Activated B cell treated with CpG ODN at 0.5 μM for 24 hours (primary cell): ENCODE measurements at regions of chr21 and their contacts with region 1.

Region 1: DNA sequence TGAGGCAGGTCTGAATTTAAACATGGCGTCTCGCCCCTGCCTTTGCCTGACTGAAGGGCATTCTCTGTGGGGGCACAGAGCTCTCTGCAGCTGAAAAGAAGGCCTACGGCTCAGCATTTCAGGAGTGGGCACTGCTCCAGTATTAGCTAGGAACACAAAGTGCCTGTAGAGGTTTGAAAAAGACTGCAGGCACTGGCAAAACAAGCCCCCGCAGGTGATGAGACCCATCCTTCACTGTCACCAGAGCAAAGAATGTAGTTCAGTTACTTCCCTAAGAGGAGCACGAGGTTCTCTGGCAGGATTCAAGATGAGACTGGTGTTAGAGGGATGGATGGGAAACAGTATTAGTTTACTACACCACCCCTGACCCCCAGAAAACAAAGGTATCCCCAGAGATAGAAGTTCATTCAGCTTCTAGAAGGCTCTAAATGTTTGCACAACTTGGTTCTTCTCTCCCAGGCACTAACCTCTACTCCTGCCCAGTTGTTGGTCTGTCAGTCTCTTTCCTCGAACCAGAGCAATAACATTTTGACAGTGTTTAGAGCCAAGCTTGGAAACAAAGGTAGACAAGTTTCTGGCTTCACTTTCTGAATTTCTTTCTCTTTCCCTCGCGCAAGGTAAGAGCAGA is 101.9 kb upstream of the KCNE2 start:
- DNase-seq: no peak
- ATAC-seq: no peak
- H3K4me3 Mint-ChIP-seq: no peak overlapping the region
- H3K27ac Mint-ChIP-seq: no peak overlapping the region
- H3K4me1 Mint-ChIP-seq: no peaks in the 10 kb centered on the region
- H3K27me3 Mint-ChIP-seq: peaks cover 14% of the 10 kb centered on the region
- CTCF ChIP-seq: no peak

Region 2: GRCh38 chr21:34313116-34313515 is 51.2 kb after region 1 on chr21:
- CTCF ChIA-PET with region 1: no interaction called
- POLR2A ChIA-PET with region 1: no interaction called
- intact Hi-C with region 1: loop called (anchors 5 kb)
- DNase-seq: no peak
- ATAC-seq: no peak
- H3K4me3 Mint-ChIP-seq: no peak overlapping the region
- H3K27ac Mint-ChIP-seq: no peak overlapping the region
- H3K4me1 Mint-ChIP-seq: no peaks in the 10 kb centered on the region
- H3K27me3 Mint-ChIP-seq: peaks cover 19% of the 10 kb centered on the region
- CTCF ChIP-seq: no peak